ENCODE measurements at regions of chr11 and their contacts with region 1.

Region 1: DNA sequence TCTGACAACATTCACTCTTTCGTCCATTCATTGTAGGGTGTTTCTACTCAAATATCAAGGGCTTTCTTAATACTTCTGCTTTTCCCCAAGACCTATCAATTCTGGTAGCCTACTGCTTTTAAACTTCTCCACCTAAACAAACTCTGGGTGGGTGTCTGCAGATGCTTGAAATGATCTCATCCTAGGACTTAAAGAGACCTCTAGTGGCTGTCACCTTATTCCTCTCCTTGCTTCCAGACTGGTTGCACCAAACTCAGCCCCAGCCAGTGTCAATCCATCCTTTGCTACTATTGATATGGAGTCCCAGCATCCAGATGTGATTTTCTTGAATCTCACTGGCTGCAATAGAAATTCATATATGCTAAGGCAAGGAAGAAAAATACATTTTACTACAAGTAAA is 274.7 kb downstream of the NXPE2 start:
- DNase-seq: peak in 1 of 2 experiments; percentile 35
- H3K4me3 ChIP-seq: no peak overlapping the region
- H3K4me3 Mint-ChIP-seq: no peak overlapping the region
- H3K27ac Mint-ChIP-seq: no peak overlapping the region
- H3K4me1 ChIP-seq: no peaks in the 10 kb centered on the region
- H3K4me1 Mint-ChIP-seq: no peaks in the 10 kb centered on the region
- H3K27me3 ChIP-seq: no peaks in the 10 kb centered on the region; the same call in 1 of the 2 replicates
- H3K27me3 Mint-ChIP-seq: peaks cover 30% of the 10 kb centered on the region
- CTCF ChIP-seq: peak; percentile 27 to 60

Region 2: DNA sequence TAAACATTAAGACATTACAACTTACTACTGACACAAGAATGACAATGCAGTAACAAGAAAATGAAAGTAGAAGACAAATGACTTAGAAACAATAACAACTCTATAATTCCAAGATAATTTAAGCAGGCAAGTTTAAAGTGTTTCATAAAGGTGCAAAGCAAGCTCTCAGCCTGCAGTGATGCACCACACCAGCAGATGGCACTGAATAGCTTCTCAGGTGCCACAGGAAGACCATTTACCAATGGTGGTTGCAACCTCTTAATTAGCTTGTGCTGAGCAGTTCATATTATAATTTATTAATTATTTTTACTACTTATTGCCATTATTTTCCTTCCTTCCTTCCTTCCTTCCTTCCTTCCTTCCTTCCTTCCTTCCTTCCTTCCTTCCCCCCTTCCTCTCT is 214.1 kb before region 1 on chr11:
- CTCF ChIA-PET with region 1: interaction called, 3 read pairs
- POLR2A ChIA-PET with region 1: no interaction called
- intact Hi-C with region 1: loop called (anchors 1 kb)
- DNase-seq: peak; percentile 63 to 67
- H3K4me3 ChIP-seq: no peak overlapping the region
- H3K4me3 Mint-ChIP-seq: no peak overlapping the region
- H3K27ac Mint-ChIP-seq: no peak overlapping the region
- H3K4me1 ChIP-seq: no peaks in the 10 kb centered on the region
- H3K4me1 Mint-ChIP-seq: no peaks in the 10 kb centered on the region
- H3K27me3 ChIP-seq: no peaks in the 10 kb centered on the region
- H3K27me3 Mint-ChIP-seq: peaks cover 13% of the 10 kb centered on the region
- CTCF ChIP-seq: peak; percentile 90 to 97

Region 3: GRCh38 chr11:115338476-115338875 is 385.4 kb after region 1 on chr11:
- CTCF ChIA-PET with region 1: no interaction called
- POLR2A ChIA-PET with region 1: no interaction called
- intact Hi-C with region 1: no loop called
- DNase-seq: peak; percentile 34 to 56
- H3K4me3 ChIP-seq: no peak overlapping the region
- H3K4me3 Mint-ChIP-seq: no peak overlapping the region
- H3K27ac Mint-ChIP-seq: no peak overlapping the region
- H3K4me1 ChIP-seq: peaks cover 43% of the 10 kb centered on the region
- H3K4me1 Mint-ChIP-seq: peaks cover 24% of the 10 kb centered on the region
- H3K27me3 ChIP-seq: no peaks in the 10 kb centered on the region
- H3K27me3 Mint-ChIP-seq: no peaks in the 10 kb centered on the region
- CTCF ChIP-seq: no peak

Measured in Caco-2 (cell line).